Activated B cell treated with CpG ODN at 0.5 μM for 24 hours (primary cell): ENCODE measurements at regions of chr17 and their contacts with region 1.

Region 1: GRCh38 chr17:79393358-79394202 is 217.3 kb downstream of the RBFOX3 start:
- DNase-seq: peak; percentile 81
- ATAC-seq: peak; percentile 84
- H3K4me3 Mint-ChIP-seq: no peak overlapping the region
- H3K27ac Mint-ChIP-seq: no peak overlapping the region
- H3K4me1 Mint-ChIP-seq: peaks cover 3% of the 10 kb centered on the region
- H3K27me3 Mint-ChIP-seq: peaks cover 46% of the 10 kb centered on the region
- CTCF ChIP-seq: peak; percentile 88

Region 2: DNA sequence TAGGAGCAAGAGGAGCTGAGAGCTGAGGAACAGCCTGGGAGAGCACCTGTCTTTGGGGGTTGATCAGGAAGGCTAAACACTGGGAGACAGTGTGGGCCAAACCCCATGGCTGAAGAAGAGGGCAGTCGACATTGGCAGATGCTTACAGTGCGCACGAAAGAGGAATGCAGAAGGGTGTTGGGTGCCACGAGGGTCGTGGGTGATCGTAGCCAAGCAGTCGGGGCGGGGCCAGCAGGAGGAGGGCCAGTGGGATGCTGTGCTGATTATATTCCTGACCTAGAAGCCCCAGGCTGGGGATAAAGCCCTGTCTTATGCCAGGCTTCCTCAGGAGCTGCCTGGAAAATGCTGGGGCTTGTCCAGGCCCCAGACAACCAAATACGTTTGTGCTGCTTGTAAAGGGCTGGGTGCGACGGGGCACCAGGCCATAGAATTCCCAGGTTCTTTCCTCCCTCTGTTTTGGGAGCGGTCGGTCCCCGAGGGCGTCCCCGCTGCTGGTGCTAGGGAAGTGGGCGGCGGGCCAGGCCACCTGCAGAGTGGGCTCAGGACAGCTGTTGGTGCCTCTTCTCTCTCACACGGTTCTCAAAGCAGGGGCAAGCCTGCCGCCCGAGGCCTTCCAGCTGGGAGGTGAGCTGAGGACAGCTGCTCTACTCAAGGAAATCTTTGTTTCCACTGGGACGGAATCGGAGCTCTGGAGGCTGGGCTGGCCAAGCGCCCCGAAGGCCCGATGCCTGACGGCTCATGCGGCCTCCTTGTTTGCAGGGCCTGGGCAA is 359.7 kb before region 1 on chr17:
- CTCF ChIA-PET with region 1: no interaction called
- POLR2A ChIA-PET with region 1: no interaction called
- intact Hi-C with region 1: no loop called
- DNase-seq: no peak
- ATAC-seq: no peak
- H3K4me3 Mint-ChIP-seq: no peak overlapping the region
- H3K27ac Mint-ChIP-seq: no peak overlapping the region
- H3K4me1 Mint-ChIP-seq: no peaks in the 10 kb centered on the region
- H3K27me3 Mint-ChIP-seq: peaks cover 23% of the 10 kb centered on the region
- CTCF ChIP-seq: no peak

Region 3: DNA sequence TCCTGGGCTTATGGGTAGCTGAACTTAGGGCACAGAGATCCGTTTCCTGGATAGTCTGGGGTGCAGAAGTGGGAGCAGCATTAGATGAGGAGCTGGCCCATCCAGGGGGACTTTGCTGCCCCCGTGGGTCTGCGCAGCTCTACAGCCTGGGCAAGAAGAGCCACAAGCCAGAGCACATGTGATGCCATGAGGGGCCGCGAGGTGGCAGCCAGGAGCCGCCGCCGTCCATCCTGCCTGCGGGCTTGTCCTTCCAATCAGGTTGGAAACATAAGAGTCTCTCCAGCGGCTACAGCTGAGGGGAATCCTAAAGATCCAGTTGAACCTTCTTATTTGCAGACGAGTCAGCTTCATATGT is 347.8 kb before region 1 on chr17:
- CTCF ChIA-PET with region 1: interaction called, 19 read pairs
- POLR2A ChIA-PET with region 1: no interaction called
- intact Hi-C with region 1: loop called (anchors 1 kb)
- DNase-seq: peak; percentile 55
- ATAC-seq: peak; percentile 87
- H3K4me3 Mint-ChIP-seq: no peak overlapping the region
- H3K27ac Mint-ChIP-seq: no peak overlapping the region
- H3K4me1 Mint-ChIP-seq: no peaks in the 10 kb centered on the region
- H3K27me3 Mint-ChIP-seq: peaks cover 31% of the 10 kb centered on the region
- CTCF ChIP-seq: peak; percentile 89

Region 4: DNA sequence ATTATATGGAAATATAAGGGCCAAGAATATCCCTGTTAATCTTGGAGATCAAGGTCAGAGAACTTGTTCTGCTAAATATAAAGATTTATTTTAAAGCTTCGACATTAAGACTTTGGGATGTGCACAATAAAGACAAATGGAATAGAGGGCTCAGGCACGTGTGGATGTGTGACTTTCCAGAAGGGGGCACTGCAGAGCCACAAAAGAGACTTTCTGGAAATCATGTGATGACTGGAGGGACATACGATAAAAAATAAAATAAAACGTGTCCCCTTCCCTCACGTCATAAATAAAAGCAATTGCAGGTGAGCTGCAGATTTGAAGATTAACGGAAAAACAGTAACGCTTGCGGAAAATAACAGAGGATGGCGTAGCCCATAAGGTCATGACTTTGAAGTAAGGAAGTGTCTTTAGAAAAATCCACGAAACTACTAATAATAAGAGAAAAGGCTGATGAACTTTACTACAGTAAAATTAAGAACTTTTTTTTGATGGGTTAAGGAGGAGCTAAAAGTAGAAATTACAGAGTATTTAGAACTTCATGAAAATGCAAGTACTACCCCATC is 328.4 kb before region 1 on chr17:
- CTCF ChIA-PET with region 1: interaction called, 8 read pairs
- POLR2A ChIA-PET with region 1: no interaction called
- intact Hi-C with region 1: loop called (anchors 1 kb)
- DNase-seq: no peak
- ATAC-seq: no peak
- H3K4me3 Mint-ChIP-seq: no peak overlapping the region
- H3K27ac Mint-ChIP-seq: no peak overlapping the region
- H3K4me1 Mint-ChIP-seq: no peaks in the 10 kb centered on the region
- H3K27me3 Mint-ChIP-seq: peaks cover 8% of the 10 kb centered on the region
- CTCF ChIP-seq: no peak

Region 5: GRCh38 chr17:79087428-79088143 is 306.0 kb before region 1 on chr17:
- CTCF ChIA-PET with region 1: interaction called, 161 read pairs
- POLR2A ChIA-PET with region 1: interaction called, 3 read pairs
- intact Hi-C with region 1: loop called (anchors 1 kb)
- DNase-seq: peak; percentile 79
- ATAC-seq: peak; percentile 90
- H3K4me3 Mint-ChIP-seq: no peak overlapping the region
- H3K27ac Mint-ChIP-seq: no peak overlapping the region
- H3K4me1 Mint-ChIP-seq: no peaks in the 10 kb centered on the region
- H3K27me3 Mint-ChIP-seq: peaks cover 3% of the 10 kb centered on the region
- CTCF ChIP-seq: peak; percentile 86

Region 6: GRCh38 chr17:79188048-79188447 is 205.5 kb before region 1 on chr17:
- CTCF ChIA-PET with region 1: interaction called, 44 read pairs
- POLR2A ChIA-PET with region 1: no interaction called
- intact Hi-C with region 1: loop called (anchors 1 kb)
- DNase-seq: no peak
- ATAC-seq: peak; percentile 52
- H3K4me3 Mint-ChIP-seq: no peak overlapping the region
- H3K27ac Mint-ChIP-seq: no peak overlapping the region
- H3K4me1 Mint-ChIP-seq: peaks cover 2% of the 10 kb centered on the region
- H3K27me3 Mint-ChIP-seq: peaks cover 56% of the 10 kb centered on the region
- CTCF ChIP-seq: no peak

Region 7: DNA sequence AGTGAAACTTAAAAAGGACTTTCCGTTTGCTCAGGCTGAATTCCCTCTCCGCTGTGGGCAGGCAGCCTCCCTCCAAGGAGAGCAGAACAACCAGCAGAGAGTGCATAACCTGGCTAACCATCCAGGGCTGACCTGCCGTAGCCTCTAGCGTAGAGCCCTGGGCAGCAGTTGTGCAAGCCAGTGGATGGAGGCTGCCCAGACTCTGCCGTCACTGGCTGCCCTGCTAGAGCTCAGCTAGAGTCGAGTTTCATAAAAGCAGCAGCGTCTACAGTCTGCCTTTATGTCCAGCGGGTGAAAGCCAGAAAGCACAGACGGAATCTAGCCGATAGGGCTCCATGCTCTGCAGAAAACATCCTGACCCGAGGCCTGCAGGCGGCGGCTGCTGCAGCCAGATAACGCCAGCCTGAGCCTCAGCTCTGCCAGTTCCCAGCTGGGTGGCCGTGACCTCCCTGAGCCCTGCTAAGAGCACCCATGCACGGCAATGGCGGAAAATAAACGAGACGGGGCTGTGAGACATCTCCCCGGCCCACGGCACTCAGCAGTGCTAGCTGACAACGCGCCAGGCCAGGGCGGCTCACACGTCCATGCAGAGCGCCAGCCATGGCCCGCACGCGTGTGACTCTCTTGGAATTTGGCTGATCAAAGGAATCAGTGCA is 87.7 kb before region 1 on chr17:
- CTCF ChIA-PET with region 1: interaction called, 3 read pairs
- POLR2A ChIA-PET with region 1: no interaction called
- intact Hi-C with region 1: loop called (anchors 10 kb)
- DNase-seq: no peak
- ATAC-seq: no peak
- H3K4me3 Mint-ChIP-seq: no peak overlapping the region
- H3K27ac Mint-ChIP-seq: no peak overlapping the region
- H3K4me1 Mint-ChIP-seq: peaks cover 23% of the 10 kb centered on the region
- H3K27me3 Mint-ChIP-seq: peaks cover 7% of the 10 kb centered on the region
- CTCF ChIP-seq: no peak

Region 8: GRCh38 chr17:79340333-79341221 is 53.0 kb before region 1 on chr17:
- CTCF ChIA-PET with region 1: interaction called, 16 read pairs
- POLR2A ChIA-PET with region 1: interaction called, 7 read pairs
- intact Hi-C with region 1: loop called (anchors 1 kb)
- DNase-seq: peak; percentile 51
- ATAC-seq: peak; percentile 83
- H3K4me3 Mint-ChIP-seq: peak overlapping the region; percentile 80
- H3K27ac Mint-ChIP-seq: peak overlapping the region; percentile 97
- H3K4me1 Mint-ChIP-seq: peaks cover 51% of the 10 kb centered on the region
- H3K27me3 Mint-ChIP-seq: peaks cover 6% of the 10 kb centered on the region
- CTCF ChIP-seq: no peak